ENCODE measurements at regions of chr15 and their contacts with region 1.

Region 1: GRCh38 chr15:55897560-55898336 is 95.7 kb downstream of the NEDD4 start:
- DNase-seq: peak; percentile 71
- H3K4me3 ChIP-seq: peak overlapping the region in 1 of 2 experiments; percentile 15; a peak in 1 of 4 replicates
- H3K27ac ChIP-seq: peak overlapping the region; percentile 56 to 59
- H3K4me1 ChIP-seq: peaks cover 4 to 12% of the 10 kb centered on the region in 2 experiments; a peak in 3 of 4 replicates
- H3K27me3 ChIP-seq: no peaks in the 10 kb centered on the region
- CTCF ChIP-seq: peak; percentile 95
- EP300 ChIP-seq: no peak
- RAD21 ChIP-seq: peak; percentile 77

Region 2: GRCh38 chr15:55494931-55495330 is 402.8 kb before region 1 on chr15:
- CTCF ChIA-PET with region 1: no interaction called
- POLR2A ChIA-PET with region 1: no interaction called
- DNase-seq: no peak
- H3K4me3 ChIP-seq: no peak overlapping the region
- H3K27ac ChIP-seq: no peak overlapping the region
- H3K4me1 ChIP-seq: peaks cover 0 to 2% of the 10 kb centered on the region in 2 experiments; a peak in 2 of 4 replicates
- H3K27me3 ChIP-seq: no peaks in the 10 kb centered on the region
- CTCF ChIP-seq: no peak
- EP300 ChIP-seq: no peak
- RAD21 ChIP-seq: no peak

Region 3: DNA sequence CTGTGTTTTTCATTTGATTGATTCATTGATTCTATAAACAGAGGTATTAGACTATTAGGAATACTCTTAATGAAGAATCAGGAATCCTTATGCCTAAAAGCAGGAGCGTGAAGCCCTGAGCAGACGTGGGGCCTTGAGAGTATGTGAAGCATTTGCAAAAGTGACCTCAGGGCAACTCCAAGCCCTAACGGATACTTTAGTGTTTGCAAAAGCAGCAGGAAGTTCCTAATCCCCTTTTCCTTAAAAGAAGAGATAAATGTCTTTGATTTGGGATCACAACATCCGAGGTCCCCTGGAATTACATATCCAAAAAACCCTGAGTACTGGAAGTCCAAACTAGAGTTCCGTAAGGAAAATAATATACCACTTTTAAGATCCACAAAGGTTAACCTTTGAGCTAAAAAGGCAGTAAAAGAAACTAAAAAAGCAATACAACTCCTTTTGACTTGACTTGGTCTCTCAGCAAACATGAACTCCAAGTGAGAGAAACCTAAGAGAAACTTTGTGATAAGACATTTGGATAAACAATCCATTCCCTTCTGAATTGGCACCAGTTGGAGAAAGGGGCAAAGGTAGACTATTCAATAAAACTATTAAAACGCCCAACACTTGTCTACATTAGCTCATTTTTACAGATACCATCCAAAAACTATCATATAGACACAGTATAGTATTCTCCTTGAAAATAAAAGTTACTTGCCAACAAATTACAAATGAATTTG is 182.2 kb before region 1 on chr15:
- CTCF ChIA-PET with region 1: no interaction called
- POLR2A ChIA-PET with region 1: no interaction called
- DNase-seq: no peak
- H3K4me3 ChIP-seq: no peak overlapping the region
- H3K27ac ChIP-seq: no peak overlapping the region
- H3K4me1 ChIP-seq: peaks cover 0 to 16% of the 10 kb centered on the region in 2 experiments; a peak in 2 of 4 replicates
- H3K27me3 ChIP-seq: no peaks in the 10 kb centered on the region
- CTCF ChIP-seq: no peak
- EP300 ChIP-seq: no peak
- RAD21 ChIP-seq: no peak

Region 4: GRCh38 chr15:55907797-55908196 is 10.0 kb after region 1 on chr15:
- CTCF ChIA-PET with region 1: interaction called, 16 read pairs
- POLR2A ChIA-PET with region 1: no interaction called
- DNase-seq: peak; percentile 3
- H3K4me3 ChIP-seq: peak overlapping the region; percentile 21 to 25; a peak in 1 of 4 replicates
- H3K27ac ChIP-seq: peak overlapping the region; percentile 74 to 96; a peak in 3 of 4 replicates
- H3K4me1 ChIP-seq: peaks cover 3 to 14% of the 10 kb centered on the region in 2 experiments
- H3K27me3 ChIP-seq: no peaks in the 10 kb centered on the region
- CTCF ChIP-seq: no peak
- EP300 ChIP-seq: peak; percentile 38 to 94; a peak in 3 of 4 replicates
- RAD21 ChIP-seq: no peak

Region 5: GRCh38 chr15:55917881-55918296 is 20.1 kb after region 1 on chr15:
- CTCF ChIA-PET with region 1: interaction called, 20 read pairs
- POLR2A ChIA-PET with region 1: no interaction called
- DNase-seq: peak; percentile 23
- H3K4me3 ChIP-seq: peak overlapping the region in 1 of 2 experiments; percentile 63; a peak in 2 of 4 replicates
- H3K27ac ChIP-seq: peak overlapping the region; percentile 76 to 89; a peak in 3 of 4 replicates
- H3K4me1 ChIP-seq: peaks cover 5 to 27% of the 10 kb centered on the region in 2 experiments; a peak in 2 of 4 replicates
- H3K27me3 ChIP-seq: no peaks in the 10 kb centered on the region
- CTCF ChIP-seq: peak; percentile 83
- EP300 ChIP-seq: no peak
- RAD21 ChIP-seq: peak; percentile 57

Region 6: GRCh38 chr15:55999636-56000035 is 101.9 kb after region 1 on chr15:
- CTCF ChIA-PET with region 1: no interaction called
- POLR2A ChIA-PET with region 1: no interaction called
- DNase-seq: no peak
- H3K4me3 ChIP-seq: no peak overlapping the region
- H3K27ac ChIP-seq: no peak overlapping the region
- H3K4me1 ChIP-seq: peaks cover under 1 to 2% of the 10 kb centered on the region in 2 experiments; a peak in 3 of 4 replicates
- H3K27me3 ChIP-seq: no peaks in the 10 kb centered on the region
- CTCF ChIP-seq: no peak
- EP300 ChIP-seq: no peak
- RAD21 ChIP-seq: no peak

Region 7: DNA sequence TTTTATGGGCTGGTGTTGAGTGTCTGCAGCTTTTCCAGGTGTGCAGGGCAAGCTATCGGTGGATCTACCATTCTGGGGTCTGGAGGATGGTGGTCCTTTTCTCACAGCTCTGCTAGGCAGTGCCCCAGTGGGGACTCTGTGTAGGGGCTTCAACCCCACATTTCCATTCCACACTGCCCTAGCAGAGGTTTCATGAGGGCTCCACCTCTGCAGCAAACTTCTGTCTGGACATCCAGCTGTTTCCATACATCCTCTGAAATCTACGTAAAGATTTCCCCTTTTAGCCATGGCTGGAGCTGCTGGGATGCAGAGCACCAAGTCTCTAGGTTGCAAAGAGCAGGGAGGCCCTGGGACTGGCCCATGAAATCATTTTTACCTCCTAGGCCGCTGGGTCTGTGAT is 334.3 kb after region 1 on chr15:
- CTCF ChIA-PET with region 1: no interaction called
- POLR2A ChIA-PET with region 1: no interaction called
- DNase-seq: no peak
- H3K4me3 ChIP-seq: no peak overlapping the region; a peak in 1 of 4 replicates
- H3K27ac ChIP-seq: no peak overlapping the region
- H3K4me1 ChIP-seq: no peaks in the 10 kb centered on the region
- H3K27me3 ChIP-seq: no peaks in the 10 kb centered on the region
- CTCF ChIP-seq: no peak
- EP300 ChIP-seq: no peak
- RAD21 ChIP-seq: no peak